ENCODE measurements at regions of chr14 and their contacts with region 1.

Region 1: GRCh38 chr14:73759714-73760597 is 45.8 kb upstream of the PNMA1 start:
- DNase-seq: peak; percentile 89 to 98 (median 94)
- ATAC-seq: peak; percentile 75
- H3K4me3 ChIP-seq: peak overlapping the region; percentile 63
- H3K4me3 Mint-ChIP-seq: peak overlapping the region; percentile 93
- H3K27ac ChIP-seq: peak overlapping the region; percentile 94 to 97
- H3K27ac Mint-ChIP-seq: peak overlapping the region; percentile 97
- H3K4me1 ChIP-seq: peaks cover 82% of the 10 kb centered on the region
- H3K4me1 Mint-ChIP-seq: peaks cover 86% of the 10 kb centered on the region
- H3K27me3 ChIP-seq: no peaks in the 10 kb centered on the region
- H3K27me3 Mint-ChIP-seq: no peaks in the 10 kb centered on the region
- CTCF ChIP-seq: no peak

Region 2: GRCh38 chr14:73713803-73714655 is 45.9 kb before region 1 on chr14 and contains the start of gene PNMA1:
- CTCF ChIA-PET with region 1: interaction called, 4 read pairs
- POLR2A ChIA-PET with region 1: interaction called, 41 read pairs
- intact Hi-C with region 1: loop called in 1 of 2 experiments (anchors 2 kb)
- DNase-seq: peak; percentile 75 to 95 (median 82)
- ATAC-seq: peak; percentile 68
- H3K4me3 ChIP-seq: peak within 1 kb of the TSS; percentile 87
- H3K4me3 Mint-ChIP-seq: peak within 1 kb of the TSS; percentile 96
- H3K27ac ChIP-seq: peak within 1 kb of the TSS; percentile 73 to 77
- H3K27ac Mint-ChIP-seq: peak within 1 kb of the TSS; percentile 92
- H3K4me1 ChIP-seq: peaks cover 33% of the 10 kb centered on the region
- H3K4me1 Mint-ChIP-seq: peaks cover 33% of the 10 kb centered on the region
- H3K27me3 ChIP-seq: no peaks in the 10 kb centered on the region
- H3K27me3 Mint-ChIP-seq: no peaks in the 10 kb centered on the region
- CTCF ChIP-seq: no peak
- total RNA-seq, gene PNMA1: 52.6 to 55.9 TPM

Region 3: DNA sequence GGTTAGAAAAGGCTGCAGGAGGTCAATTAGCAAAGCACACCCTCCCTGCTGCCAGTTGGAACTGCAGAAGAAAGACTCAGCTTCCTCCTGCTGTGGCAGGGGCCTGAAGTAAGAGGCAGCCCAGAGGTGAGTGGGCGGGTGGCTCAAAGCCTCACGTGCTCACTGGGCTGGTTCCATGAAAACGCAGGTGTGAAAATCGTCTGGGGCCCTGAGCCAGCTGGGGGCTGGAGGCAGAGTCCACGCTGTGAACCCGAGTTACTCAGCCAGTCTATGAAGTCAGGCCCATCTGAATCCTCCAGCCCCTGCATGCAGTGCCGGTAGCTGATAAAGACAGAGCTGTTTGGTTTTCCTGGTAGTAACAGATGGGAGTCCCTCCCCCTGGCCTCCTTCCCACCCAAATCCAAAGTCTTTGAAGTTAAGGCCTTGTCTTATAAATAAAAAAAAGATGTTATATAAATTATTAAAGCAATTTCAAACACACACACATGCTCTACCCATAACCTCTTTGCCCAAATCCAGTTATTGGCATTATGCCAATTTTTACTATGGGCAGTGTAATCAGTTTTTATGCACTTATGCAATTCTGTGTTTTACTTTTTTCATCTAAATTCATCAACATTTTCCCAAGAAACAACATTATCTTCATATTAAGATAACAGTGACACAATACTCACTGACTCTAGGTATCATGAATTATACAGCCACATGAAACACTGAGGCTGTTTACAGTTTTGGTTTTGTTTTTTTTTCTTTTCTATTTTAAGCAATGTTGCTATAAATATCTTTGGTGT is 12.1 kb after region 1 on chr14:
- CTCF ChIA-PET with region 1: interaction called, 60 read pairs
- POLR2A ChIA-PET with region 1: interaction called, 138 read pairs
- intact Hi-C with region 1: loop called in 1 of 2 experiments (anchors 1 kb)
- DNase-seq: peak in 12 of 14 experiments; percentile 39 to 84 (median 59)
- ATAC-seq: peak; percentile 83
- H3K4me3 ChIP-seq: no peak overlapping the region
- H3K4me3 Mint-ChIP-seq: peak overlapping the region; percentile 81
- H3K27ac ChIP-seq: peak overlapping the region; percentile 48 to 60
- H3K27ac Mint-ChIP-seq: peak overlapping the region; percentile 88
- H3K4me1 ChIP-seq: peaks cover 74% of the 10 kb centered on the region
- H3K4me1 Mint-ChIP-seq: peaks cover 75% of the 10 kb centered on the region
- H3K27me3 ChIP-seq: no peaks in the 10 kb centered on the region
- H3K27me3 Mint-ChIP-seq: no peaks in the 10 kb centered on the region
- CTCF ChIP-seq: no peak

Region 4: GRCh38 chr14:73785873-73786695 is 26.1 kb after region 1 on chr14:
- CTCF ChIA-PET with region 1: interaction called, 40 read pairs
- POLR2A ChIA-PET with region 1: interaction called, 430 read pairs
- intact Hi-C with region 1: loop called (anchors 1 kb)
- DNase-seq: peak; percentile 51 to 84 (median 58)
- ATAC-seq: peak; percentile 70
- H3K4me3 ChIP-seq: peak overlapping the region; percentile 79
- H3K4me3 Mint-ChIP-seq: peak overlapping the region; percentile 96
- H3K27ac ChIP-seq: peak overlapping the region; percentile 67 to 76
- H3K27ac Mint-ChIP-seq: peak overlapping the region; percentile 96
- H3K4me1 ChIP-seq: peaks cover 67% of the 10 kb centered on the region
- H3K4me1 Mint-ChIP-seq: peaks cover 62% of the 10 kb centered on the region
- H3K27me3 ChIP-seq: no peaks in the 10 kb centered on the region
- H3K27me3 Mint-ChIP-seq: no peaks in the 10 kb centered on the region
- CTCF ChIP-seq: no peak

Region 5: GRCh38 chr14:73851644-73852382 is 91.9 kb after region 1 on chr14 and contains the start of gene PTGR2:
- CTCF ChIA-PET with region 1: interaction called, 3 read pairs
- POLR2A ChIA-PET with region 1: interaction called, 33 read pairs
- intact Hi-C with region 1: no loop called
- DNase-seq: peak; percentile 77 to 97 (median 85)
- ATAC-seq: peak; percentile 93
- H3K4me3 ChIP-seq: peak within 1 kb of the TSS; percentile 63
- H3K4me3 Mint-ChIP-seq: peak within 1 kb of the TSS; percentile 91
- H3K27ac ChIP-seq: peak within 1 kb of the TSS; percentile 54 to 72
- H3K27ac Mint-ChIP-seq: peak within 1 kb of the TSS; percentile 94
- H3K4me1 ChIP-seq: peaks cover 17% of the 10 kb centered on the region
- H3K4me1 Mint-ChIP-seq: peaks cover 24% of the 10 kb centered on the region
- H3K27me3 ChIP-seq: no peaks in the 10 kb centered on the region
- H3K27me3 Mint-ChIP-seq: no peaks in the 10 kb centered on the region
- CTCF ChIP-seq: no peak
- total RNA-seq, gene PTGR2: 0.70 to 1.1 TPM

Measured in CD4-positive, alpha-beta T cell (primary cell).